Activated B cell treated with CpG ODN at 0.5 μM for 24 hours (primary cell): ENCODE measurements at regions of chr7 and their contacts with region 1.

Region 1: GRCh38 chr7:39971924-39972323 is 21.9 kb downstream of the CDK13 start:
- DNase-seq: no peak
- ATAC-seq: peak; percentile 31
- H3K4me3 Mint-ChIP-seq: peak overlapping the region; percentile 21
- H3K27ac Mint-ChIP-seq: peak overlapping the region; percentile 75
- H3K4me1 Mint-ChIP-seq: peaks cover 78% of the 10 kb centered on the region
- H3K27me3 Mint-ChIP-seq: no peaks in the 10 kb centered on the region
- CTCF ChIP-seq: no peak

Region 2: DNA sequence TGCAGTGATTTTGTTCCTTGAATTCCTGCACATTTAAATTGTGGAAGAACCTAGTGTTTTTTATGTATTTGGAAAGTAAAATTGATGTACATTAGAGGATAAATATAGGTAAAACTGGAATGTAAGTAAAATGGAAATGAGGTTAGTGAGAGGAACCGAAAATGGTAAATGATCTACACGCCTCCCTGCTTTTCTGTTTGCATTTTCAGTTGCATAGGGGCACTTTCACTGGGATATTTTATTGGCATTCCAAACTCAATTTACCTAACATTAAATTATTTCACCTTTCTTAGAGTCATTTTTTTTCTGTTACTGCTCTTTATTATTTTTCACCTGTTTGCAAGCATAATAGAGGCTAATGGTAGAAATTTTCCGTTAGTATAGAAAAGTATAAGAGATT is 13.9 kb before region 1 on chr7:
- CTCF ChIA-PET with region 1: no interaction called
- POLR2A ChIA-PET with region 1: interaction called, 7 read pairs
- intact Hi-C with region 1: loop called (anchors 1 kb)
- DNase-seq: no peak
- ATAC-seq: no peak
- H3K4me3 Mint-ChIP-seq: peak overlapping the region; percentile 35
- H3K27ac Mint-ChIP-seq: peak overlapping the region; percentile 20
- H3K4me1 Mint-ChIP-seq: peaks cover 78% of the 10 kb centered on the region
- H3K27me3 Mint-ChIP-seq: no peaks in the 10 kb centered on the region
- CTCF ChIP-seq: no peak